ENCODE measurements at regions of chr1 and their contacts with region 1.

Region 1: GRCh38 chr1:40161125-40161887 is at the start of gene RLF:
- DNase-seq: peak; percentile 80 to 95
- H3K4me3 ChIP-seq: peak within 1 kb of the TSS; percentile 98
- H3K27ac ChIP-seq: peak within 1 kb of the TSS; percentile 63
- H3K4me1 ChIP-seq: peaks cover 43% of the 10 kb centered on the region
- H3K27me3 ChIP-seq: no peaks in the 10 kb centered on the region
- CTCF ChIP-seq: no peak
- total RNA-seq, gene RLF: 14.2 and 15.5 TPM in 2 replicates

Region 2: DNA sequence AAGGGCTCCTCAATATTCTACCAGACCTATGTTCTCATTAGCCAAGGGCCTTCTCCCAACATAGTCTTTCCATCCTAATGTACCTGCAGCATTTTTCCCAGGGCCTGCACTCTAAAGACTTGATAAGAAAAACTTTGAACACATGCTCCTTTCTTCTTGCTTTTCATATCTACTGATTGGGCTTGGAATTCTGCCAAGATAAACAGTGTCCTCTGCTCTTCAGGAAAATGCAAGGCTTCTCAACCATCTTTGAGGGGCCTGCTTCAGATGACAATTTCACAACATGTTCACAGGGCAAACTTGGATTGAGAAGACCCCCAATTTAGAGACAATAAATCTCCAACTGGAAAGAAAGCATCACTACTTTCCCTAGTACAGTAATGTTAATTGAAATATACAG is 38.5 kb before region 1 on chr1:
- CTCF ChIA-PET with region 1: no interaction called
- POLR2A ChIA-PET with region 1: no interaction called
- intact Hi-C with region 1: no loop called
- DNase-seq: no peak
- H3K4me3 ChIP-seq: no peak overlapping the region
- H3K27ac ChIP-seq: no peak overlapping the region
- H3K4me1 ChIP-seq: peaks cover 19% of the 10 kb centered on the region
- H3K27me3 ChIP-seq: no peaks in the 10 kb centered on the region
- CTCF ChIP-seq: no peak

Region 3: GRCh38 chr1:40315239-40315794 is 154.0 kb after region 1 on chr1:
- CTCF ChIA-PET with region 1: no interaction called
- POLR2A ChIA-PET with region 1: no interaction called
- intact Hi-C with region 1: loop called (anchors 1 kb)
- DNase-seq: peak in 1 of 2 experiments; percentile 78
- H3K4me3 ChIP-seq: no peak overlapping the region
- H3K27ac ChIP-seq: no peak overlapping the region
- H3K4me1 ChIP-seq: peaks cover 14% of the 10 kb centered on the region
- H3K27me3 ChIP-seq: peaks cover 16% of the 10 kb centered on the region
- CTCF ChIP-seq: peak; percentile 85

Region 4: GRCh38 chr1:40344597-40344996 is 183.3 kb after region 1 on chr1:
- CTCF ChIA-PET with region 1: interaction called, 12 read pairs
- POLR2A ChIA-PET with region 1: no interaction called
- intact Hi-C with region 1: no loop called
- DNase-seq: no peak
- H3K4me3 ChIP-seq: no peak overlapping the region
- H3K27ac ChIP-seq: no peak overlapping the region
- H3K4me1 ChIP-seq: peaks cover 2% of the 10 kb centered on the region; the same call in 1 of the 2 replicates
- H3K27me3 ChIP-seq: no peaks in the 10 kb centered on the region
- CTCF ChIP-seq: no peak

Measured in PC-9 (cell line).